MCF 10A (cell line): ENCODE measurements at regions of chr7 and their contacts with region 1.

Region 1: GRCh38 chr7:14542624-14543023 is 359.9 kb downstream of the DGKB start:
- DNase-seq: no peak
- H3K4me3 Mint-ChIP-seq: no peak overlapping the region
- H3K27ac Mint-ChIP-seq: no peak overlapping the region
- H3K4me1 Mint-ChIP-seq: no peaks in the 10 kb centered on the region
- H3K27me3 Mint-ChIP-seq: peaks cover 36% of the 10 kb centered on the region
- CTCF ChIP-seq: no peak

Region 2: GRCh38 chr7:14598978-14599377 is 56.4 kb after region 1 on chr7:
- CTCF ChIA-PET with region 1: no interaction called
- POLR2A ChIA-PET with region 1: no interaction called
- intact Hi-C with region 1: loop called (anchors 10 kb)
- DNase-seq: peak; percentile 16
- H3K4me3 Mint-ChIP-seq: no peak overlapping the region
- H3K27ac Mint-ChIP-seq: no peak overlapping the region
- H3K4me1 Mint-ChIP-seq: no peaks in the 10 kb centered on the region
- H3K27me3 Mint-ChIP-seq: peaks cover 12% of the 10 kb centered on the region
- CTCF ChIP-seq: no peak

Region 3: GRCh38 chr7:14676896-14677295 is 134.3 kb after region 1 on chr7:
- CTCF ChIA-PET with region 1: no interaction called
- POLR2A ChIA-PET with region 1: no interaction called
- intact Hi-C with region 1: no loop called
- DNase-seq: no peak
- H3K4me3 Mint-ChIP-seq: no peak overlapping the region
- H3K27ac Mint-ChIP-seq: no peak overlapping the region
- H3K4me1 Mint-ChIP-seq: no peaks in the 10 kb centered on the region
- H3K27me3 Mint-ChIP-seq: peaks cover 37% of the 10 kb centered on the region
- CTCF ChIP-seq: no peak

Region 4: DNA sequence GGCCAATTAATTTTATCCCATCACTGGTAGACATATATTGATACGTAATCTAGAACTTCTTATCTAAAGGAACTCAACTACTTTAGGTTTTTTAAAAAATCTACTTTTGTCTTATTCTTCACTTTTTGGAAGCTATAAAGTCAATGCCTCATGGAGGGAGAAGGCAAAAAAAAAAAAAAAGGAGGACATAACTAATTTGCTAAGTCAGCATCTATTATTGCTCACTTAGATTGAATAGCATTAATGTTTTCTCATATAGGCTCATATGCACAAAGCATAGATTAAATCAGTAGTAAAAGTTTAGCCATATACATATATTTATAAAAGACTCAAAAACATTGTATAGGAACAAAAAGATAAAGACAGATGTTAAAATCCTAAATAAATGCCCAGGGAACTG is 539.3 kb after region 1 on chr7:
- CTCF ChIA-PET with region 1: no interaction called
- POLR2A ChIA-PET with region 1: no interaction called
- intact Hi-C with region 1: no loop called
- DNase-seq: no peak
- H3K4me3 Mint-ChIP-seq: no peak overlapping the region
- H3K27ac Mint-ChIP-seq: no peak overlapping the region
- H3K4me1 Mint-ChIP-seq: no peaks in the 10 kb centered on the region
- H3K27me3 Mint-ChIP-seq: peaks cover 35% of the 10 kb centered on the region
- CTCF ChIP-seq: no peak